ENCODE measurements at regions of chr20 and their contacts with region 1.

Region 1: GRCh38 chr20:13105864-13106457 is 97.2 kb downstream of the SPTLC3 start:
- DNase-seq: no peak
- ATAC-seq: no peak
- H3K4me3 ChIP-seq: no peak overlapping the region
- H3K27ac ChIP-seq: no peak overlapping the region
- H3K4me1 ChIP-seq: peaks cover 0 to 13% (median 4%) of the 10 kb centered on the region in 9 donors
- H3K27me3 ChIP-seq: peaks cover 0 to 4% (median 0%) of the 10 kb centered on the region in 7 donors
- CTCF ChIP-seq: peak; percentile 50 to 88 (median 78)

Region 2: GRCh38 chr20:11676630-11677284 is 1429.2 kb before region 1 on chr20:
- intact Hi-C with region 1: loop called in 5 of 10 experiments (anchors 10 kb)
- DNase-seq: peak; percentile 46 to 56
- ATAC-seq: peak in 7 of 8 donors; percentile 82 to 93 (median 87)
- H3K4me3 ChIP-seq: peak overlapping the region in 1 of 10 donors; percentile 23
- H3K27ac ChIP-seq: peak overlapping the region in 3 of 10 donors; percentile 11 to 41 (median 19)
- H3K4me1 ChIP-seq: peaks cover 0 to 19% (median 4%) of the 10 kb centered on the region in 9 donors
- H3K27me3 ChIP-seq: peaks cover 0 to 7% (median 0%) of the 10 kb centered on the region in 7 donors
- CTCF ChIP-seq: peak; percentile 62 to 92 (median 84)

Region 3: GRCh38 chr20:11686820-11687543 is 1419.0 kb before region 1 on chr20:
- intact Hi-C with region 1: loop called in 1 of 10 experiments (anchors 10 kb)
- DNase-seq: peak in 1 of 2 donors; percentile 41
- ATAC-seq: peak in 5 of 8 donors; percentile 39 to 75 (median 44)
- H3K4me3 ChIP-seq: peak overlapping the region in 9 of 10 donors; percentile 21 to 54 (median 43)
- H3K27ac ChIP-seq: no peak overlapping the region
- H3K4me1 ChIP-seq: peaks cover 0 to 20% (median 5%) of the 10 kb centered on the region in 9 donors
- H3K27me3 ChIP-seq: peaks cover 0 to 18% (median 8%) of the 10 kb centered on the region in 7 donors
- CTCF ChIP-seq: no peak

Region 4: GRCh38 chr20:12925214-12925755 is 180.7 kb before region 1 on chr20:
- intact Hi-C with region 1: loop called in 8 of 10 experiments (anchors 2 to 10 kb)
- DNase-seq: peak in 1 of 2 donors; percentile 29
- ATAC-seq: peak; percentile 73 to 92 (median 86)
- H3K4me3 ChIP-seq: no peak overlapping the region
- H3K27ac ChIP-seq: no peak overlapping the region
- H3K4me1 ChIP-seq: peaks cover 0 to 3% (median 0%) of the 10 kb centered on the region in 9 donors
- H3K27me3 ChIP-seq: peaks cover 0 to 13% (median 0%) of the 10 kb centered on the region in 7 donors
- CTCF ChIP-seq: peak; percentile 49 to 85 (median 73)

Region 5: GRCh38 chr20:12970372-12970821 is 135.6 kb before region 1 on chr20:
- intact Hi-C with region 1: loop called (anchors 1 to 5 kb)
- DNase-seq: peak in 1 of 2 donors; percentile 6
- ATAC-seq: peak in 4 of 8 donors; percentile 38 to 54 (median 43)
- H3K4me3 ChIP-seq: no peak overlapping the region
- H3K27ac ChIP-seq: no peak overlapping the region
- H3K4me1 ChIP-seq: no peaks in the 10 kb centered on the region
- H3K27me3 ChIP-seq: no peaks in the 10 kb centered on the region
- CTCF ChIP-seq: peak in 8 of 9 donors; percentile 18 to 71 (median 61)

Region 6: GRCh38 chr20:13009682-13010406 is 96.1 kb before region 1 on chr20:
- intact Hi-C with region 1: loop called in 1 of 10 experiments (anchors 10 kb)
- DNase-seq: peak in 1 of 2 donors; percentile 69
- ATAC-seq: peak; percentile 84 to 94 (median 89)
- H3K4me3 ChIP-seq: peak overlapping the region; percentile 1 to 64 (median 50)
- H3K27ac ChIP-seq: peak overlapping the region; percentile 33 to 86 (median 62)
- H3K4me1 ChIP-seq: peaks cover 2 to 37% (median 14%) of the 10 kb centered on the region in 9 donors
- H3K27me3 ChIP-seq: no peaks in the 10 kb centered on the region
- CTCF ChIP-seq: no peak

Region 7: DNA sequence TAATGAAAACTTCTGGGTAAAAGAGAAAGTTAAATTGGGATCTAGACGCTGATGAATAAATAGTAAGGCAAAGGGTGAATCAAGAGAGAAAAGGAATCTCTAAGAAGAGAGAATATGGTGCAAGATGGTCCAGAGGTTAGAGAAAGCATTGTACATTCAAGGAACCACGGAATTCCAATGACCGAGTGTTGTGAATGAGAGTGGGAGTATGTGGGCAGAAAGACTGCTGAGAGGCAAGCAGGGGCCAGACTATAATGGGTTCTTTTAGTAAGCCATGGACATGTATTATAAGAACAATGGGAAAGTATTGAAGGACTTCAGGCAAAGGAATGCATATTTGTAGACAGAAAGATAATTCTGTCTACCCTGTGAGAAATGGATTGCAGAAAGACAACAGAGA is 52.0 kb before region 1 on chr20:
- intact Hi-C with region 1: no loop called
- DNase-seq: no peak
- ATAC-seq: no peak
- H3K4me3 ChIP-seq: no peak overlapping the region
- H3K27ac ChIP-seq: no peak overlapping the region
- H3K4me1 ChIP-seq: no peaks in the 10 kb centered on the region
- H3K27me3 ChIP-seq: no peaks in the 10 kb centered on the region
- CTCF ChIP-seq: no peak

Measured in heart right ventricle (tissue), 16 donors.